Naive thymus-derived CD8-positive, alpha-beta T cell (primary cell): ENCODE measurements at regions of chr6 and their contacts with region 1.

Region 1: DNA sequence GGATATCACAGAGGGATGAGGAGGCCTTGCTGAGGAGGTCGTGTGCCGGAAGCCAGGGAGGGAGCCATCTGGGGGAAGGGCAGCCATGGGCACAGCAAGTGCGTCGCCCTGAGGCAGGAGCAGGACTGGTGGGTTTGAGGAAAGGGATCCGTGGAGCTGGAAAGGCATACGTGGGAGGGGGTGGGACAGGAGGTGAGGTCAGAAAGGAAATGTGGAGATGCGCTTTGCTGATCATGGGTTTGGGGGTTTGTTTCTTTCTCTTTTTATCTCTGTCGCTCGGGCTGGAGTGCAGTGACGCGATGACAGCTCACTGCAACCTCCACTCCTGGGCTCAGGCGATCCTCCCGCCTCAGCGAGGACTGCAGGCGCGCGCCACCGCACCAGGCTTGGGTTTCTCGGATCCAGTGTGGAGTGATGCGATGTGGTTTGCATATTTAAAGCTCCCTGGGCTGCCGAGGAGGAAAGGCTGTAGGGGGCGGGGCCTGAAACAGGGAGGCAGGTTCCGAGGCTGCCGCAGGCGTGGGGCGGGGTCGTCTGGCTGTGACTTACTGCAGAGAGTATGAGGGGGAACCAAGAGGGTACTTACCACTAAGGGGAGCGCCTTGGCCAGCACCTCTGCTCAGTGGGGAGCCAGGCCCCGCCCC is 12.5 kb upstream of the BAK1 start:
- DNase-seq: peak; percentile 40 to 82 (median 54)
- ATAC-seq: peak; percentile 71 to 73
- H3K4me3 Mint-ChIP-seq: peak overlapping the region; percentile 72 to 90 (median 86)
- H3K27ac Mint-ChIP-seq: peak overlapping the region; percentile 85 to 98 (median 95)
- H3K4me1 Mint-ChIP-seq: peaks cover 14 to 47% (median 37%) of the 10 kb centered on the region in 4 donors
- H3K27me3 Mint-ChIP-seq: no peaks in the 10 kb centered on the region

Region 2: DNA sequence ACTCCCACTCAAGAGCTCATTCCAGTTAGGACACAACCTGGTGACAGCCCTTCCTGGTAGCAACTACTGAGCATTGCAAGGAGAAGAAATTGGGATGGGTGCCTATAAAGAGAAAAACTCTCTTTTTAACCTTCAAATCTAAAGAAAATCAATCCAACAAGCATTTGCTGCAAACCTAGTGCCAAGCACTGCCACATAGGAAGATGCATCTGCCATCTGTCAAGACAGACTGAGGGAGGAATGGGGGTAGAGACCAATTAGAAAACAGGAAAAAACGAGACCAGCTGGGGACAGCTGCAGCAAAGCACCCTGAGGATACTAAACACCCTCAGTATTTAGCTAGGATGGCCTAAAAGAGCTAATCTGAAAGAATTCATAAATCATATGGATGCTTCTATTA is 679.6 kb before region 1 on chr6:
- POLR2A ChIA-PET with region 1: no interaction called
- DNase-seq: no peak
- ATAC-seq: no peak
- H3K4me3 Mint-ChIP-seq: no peak overlapping the region
- H3K27ac Mint-ChIP-seq: no peak overlapping the region
- H3K4me1 Mint-ChIP-seq: peaks cover 0 to 17% (median 0%) of the 10 kb centered on the region in 4 donors
- H3K27me3 Mint-ChIP-seq: peaks cover 0 to 22% (median 8%) of the 10 kb centered on the region in 5 donors

Region 3: GRCh38 chr6:33579828-33580714 is 12.5 kb before region 1 on chr6 and contains the start of gene BAK1:
- POLR2A ChIA-PET with region 1: interaction called, 13 read pairs
- DNase-seq: peak; percentile 73 to 92 (median 80)
- ATAC-seq: peak; percentile 96 to 98
- H3K4me3 Mint-ChIP-seq: peak within 1 kb of the TSS; percentile 90 to 97 (median 94)
- H3K27ac Mint-ChIP-seq: peak within 1 kb of the TSS; percentile 94 to 99 (median 98)
- H3K4me1 Mint-ChIP-seq: peaks cover 16 to 43% (median 40%) of the 10 kb centered on the region in 4 donors
- H3K27me3 Mint-ChIP-seq: no peaks in the 10 kb centered on the region
- polyA plus RNA-seq, gene BAK1: 11.8 to 20.9 (median 13.2) TPM

Region 4: DNA sequence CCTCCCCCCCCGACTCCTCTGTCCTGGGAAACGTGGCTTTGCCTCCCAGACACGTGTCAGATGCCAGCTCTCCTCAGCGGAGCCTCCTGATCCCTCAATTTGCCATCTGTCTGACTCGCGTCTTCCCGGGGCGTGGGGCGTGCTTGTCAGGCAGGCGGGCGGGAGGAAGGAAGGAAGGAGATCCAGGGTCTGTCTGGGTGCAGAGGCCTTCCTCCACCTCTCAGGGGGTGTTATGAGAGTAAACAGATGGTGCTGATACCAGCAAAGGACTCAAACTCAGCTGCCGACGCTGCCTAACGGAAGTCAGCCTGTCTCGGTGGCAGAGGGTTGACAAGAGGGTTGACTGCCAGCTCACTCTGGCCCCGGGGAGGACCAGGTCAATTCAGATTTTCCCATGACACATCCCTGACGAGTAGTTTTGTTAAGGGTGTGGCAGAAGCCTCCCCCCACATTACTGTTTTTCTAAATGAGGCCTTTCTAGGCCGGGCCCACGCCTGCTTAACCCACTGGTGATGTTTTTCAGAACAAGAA is 101.9 kb after region 1 on chr6:
- POLR2A ChIA-PET with region 1: interaction called, 18 read pairs
- DNase-seq: peak in 9 of 10 donors; percentile 32 to 78 (median 53)
- ATAC-seq: peak; percentile 54 to 77
- H3K4me3 Mint-ChIP-seq: peak overlapping the region; percentile 45 to 81 (median 74)
- H3K27ac Mint-ChIP-seq: peak overlapping the region; percentile 95 to 99 (median 97)
- H3K4me1 Mint-ChIP-seq: peaks cover 25 to 71% (median 70%) of the 10 kb centered on the region in 4 donors
- H3K27me3 Mint-ChIP-seq: no peaks in the 10 kb centered on the region